ENCODE measurements at regions of chr17 and their contacts with region 1.

Region 1: DNA sequence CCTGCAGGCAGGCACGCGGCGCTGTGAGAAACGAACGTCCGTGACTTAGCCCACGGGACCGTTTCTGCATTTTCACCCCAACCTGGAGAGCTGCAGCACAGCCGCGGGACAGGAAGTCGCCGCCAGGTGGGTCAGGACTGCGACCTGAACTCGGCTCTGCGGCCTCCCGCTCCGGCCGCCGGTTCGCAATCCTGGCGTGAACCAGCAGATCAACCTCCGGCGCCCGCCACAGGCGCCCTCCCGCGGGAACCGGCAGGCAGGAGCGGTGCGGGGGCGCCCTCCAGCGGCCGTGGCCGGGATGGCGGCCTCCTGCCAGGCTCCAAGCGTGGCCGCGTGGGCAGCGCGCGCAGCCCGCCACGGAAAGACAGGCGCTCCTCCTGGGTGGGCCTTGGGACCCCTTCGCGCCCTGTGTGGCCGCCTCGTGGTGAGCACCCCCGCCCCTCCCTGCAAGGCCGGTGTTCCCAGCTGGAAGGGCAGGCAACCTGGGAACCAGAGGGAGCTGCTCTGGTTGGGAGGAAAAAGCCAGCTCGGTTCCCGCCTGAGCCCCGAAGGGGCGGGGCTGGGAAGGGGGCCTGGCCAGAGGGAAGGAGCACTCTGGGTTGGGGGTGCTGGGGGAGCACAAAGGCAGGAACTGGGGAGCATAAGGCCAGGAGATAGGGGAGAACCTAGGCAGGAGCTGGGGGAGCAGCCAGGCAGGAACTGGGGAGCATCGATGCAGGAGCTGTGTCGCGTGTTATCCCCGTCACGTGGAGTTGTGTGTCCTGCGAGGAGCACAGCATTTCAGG is 28.2 kb downstream of the ACTG1 start:
- DNase-seq: peak; percentile 92 to 95 (median 92)
- ATAC-seq: peak; percentile 75
- H3K4me3 ChIP-seq: no peak overlapping the region
- H3K27ac ChIP-seq: peak overlapping the region in 3 of 4 donors; percentile 40 to 72 (median 60)
- H3K4me1 ChIP-seq: peaks cover 60% of the 10 kb centered on the region
- H3K27me3 ChIP-seq: no peaks in the 10 kb centered on the region
- CTCF ChIP-seq: peak; percentile 73 to 99 (median 98)
- POLR2A ChIP-seq: no peak

Region 2: GRCh38 chr17:81253358-81254131 is 230.8 kb before region 1 on chr17:
- intact Hi-C with region 1: loop called (anchors 5 kb)
- DNase-seq: peak; percentile 40 to 51 (median 47)
- ATAC-seq: peak; percentile 50
- H3K4me3 ChIP-seq: no peak overlapping the region
- H3K27ac ChIP-seq: no peak overlapping the region
- H3K4me1 ChIP-seq: peaks cover 11% of the 10 kb centered on the region
- H3K27me3 ChIP-seq: no peaks in the 10 kb centered on the region
- CTCF ChIP-seq: peak; percentile 62 to 98 (median 73)
- POLR2A ChIP-seq: no peak

Region 3: DNA sequence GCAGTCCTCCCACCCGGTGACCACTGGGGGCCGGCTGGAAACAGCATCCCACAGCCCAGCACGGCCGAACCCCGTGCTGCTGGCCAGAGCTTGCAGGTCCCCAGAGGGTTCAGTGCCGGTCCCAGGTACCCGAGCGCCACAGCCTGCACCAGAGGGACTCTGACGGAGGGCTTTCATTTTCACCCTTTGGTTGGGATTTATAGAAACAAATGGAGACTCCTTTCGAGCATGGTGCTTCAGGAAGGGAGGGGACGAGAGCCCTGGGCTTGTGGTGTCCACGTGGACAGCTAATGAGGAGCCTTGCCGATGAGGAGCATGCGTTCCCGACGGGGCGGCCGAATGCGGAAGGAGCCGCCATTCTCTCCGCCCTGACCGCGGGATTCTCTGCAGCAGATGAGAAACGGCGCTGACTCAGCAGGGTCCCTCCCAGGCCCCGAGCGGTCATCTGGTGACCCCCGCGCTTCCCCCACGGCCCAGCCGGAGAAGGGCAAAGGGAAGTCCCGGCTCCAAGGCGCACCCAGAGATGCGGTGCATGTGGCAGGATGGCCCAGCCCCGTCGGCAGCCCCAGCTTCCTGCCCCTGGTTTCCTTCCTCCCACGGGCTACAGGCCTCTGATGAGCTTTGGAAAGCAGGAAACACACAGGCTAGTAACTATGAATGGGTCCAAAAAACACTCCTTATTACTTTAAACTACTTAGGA is 199.1 kb before region 1 on chr17:
- intact Hi-C with region 1: loop called (anchors 10 kb)
- DNase-seq: peak in 3 of 4 donors; percentile 40 to 81 (median 44)
- ATAC-seq: peak; percentile 30
- H3K4me3 ChIP-seq: no peak overlapping the region
- H3K27ac ChIP-seq: peak overlapping the region in 3 of 4 donors; percentile 4 to 63 (median 54)
- H3K4me1 ChIP-seq: peaks cover 13% of the 10 kb centered on the region
- H3K27me3 ChIP-seq: no peaks in the 10 kb centered on the region
- CTCF ChIP-seq: no peak
- POLR2A ChIP-seq: peak in 1 of 3 donors; percentile 11

Region 4: DNA sequence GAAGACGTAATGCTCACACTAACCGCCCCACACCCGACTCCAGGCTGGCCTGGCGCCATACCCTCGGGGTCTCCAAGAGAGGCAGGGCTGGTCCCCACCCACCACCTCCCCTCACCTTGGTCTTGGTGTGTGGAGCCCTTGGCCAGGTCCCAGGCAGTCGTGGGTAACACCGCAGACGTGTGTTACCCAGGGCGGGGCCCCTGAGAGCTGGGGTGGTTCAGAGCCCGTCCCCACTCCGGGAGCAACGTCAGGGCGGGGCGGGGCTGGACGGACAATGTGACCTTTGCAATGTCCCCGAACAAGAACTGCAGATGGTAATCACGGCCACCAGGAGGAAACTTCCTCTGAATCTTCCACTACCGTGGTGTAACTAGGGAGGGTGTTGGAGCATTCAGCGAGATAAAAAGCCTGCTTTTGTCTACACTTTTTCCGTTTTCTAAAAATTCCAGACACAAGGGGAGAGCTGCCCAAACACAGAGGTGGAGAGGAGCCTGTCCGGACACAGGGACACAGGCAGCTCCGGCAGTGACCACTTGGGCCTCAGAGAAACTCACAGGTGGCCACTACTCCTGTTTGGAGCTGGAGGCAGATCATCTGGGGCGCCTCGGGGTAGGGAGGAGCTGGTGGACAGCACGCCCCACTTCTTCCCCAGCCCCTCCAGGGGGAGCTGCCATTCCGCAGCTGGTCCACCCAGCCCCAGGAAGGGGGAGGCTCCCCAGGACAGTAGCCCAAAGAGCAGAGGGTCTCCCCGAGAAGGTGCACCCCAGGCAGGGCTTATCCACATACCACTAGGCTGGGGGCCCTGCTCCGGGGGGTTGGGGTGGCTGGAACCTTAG is 175.1 kb before region 1 on chr17:
- intact Hi-C with region 1: no loop called
- DNase-seq: peak; percentile 84 to 91 (median 91)
- ATAC-seq: peak; percentile 90
- H3K4me3 ChIP-seq: no peak overlapping the region
- H3K27ac ChIP-seq: peak overlapping the region; percentile 59 to 80 (median 78)
- H3K4me1 ChIP-seq: peaks cover 25% of the 10 kb centered on the region
- H3K27me3 ChIP-seq: no peaks in the 10 kb centered on the region
- CTCF ChIP-seq: peak; percentile 13 to 82 (median 69)
- POLR2A ChIP-seq: peak in 2 of 3 donors; percentile 44 to 47